ENCODE measurements at regions of chr14 and their contacts with region 1.

Region 1: GRCh38 chr14:59964251-59965007 is 44.5 kb downstream of the LRRC9 start:
- DNase-seq: peak in 1 of 5 donors; percentile 44
- H3K4me3 ChIP-seq: no peak overlapping the region
- H3K4me3 Mint-ChIP-seq: peak overlapping the region; percentile 83 to 94 (median 90)
- H3K27ac ChIP-seq: no peak overlapping the region
- H3K27ac Mint-ChIP-seq: peak overlapping the region in 7 of 8 donors; percentile 56 to 98 (median 93)
- H3K4me1 ChIP-seq: no peaks in the 10 kb centered on the region
- H3K4me1 Mint-ChIP-seq: peaks cover 10 to 23% (median 14%) of the 10 kb centered on the region in 3 donors
- H3K27me3 ChIP-seq: no peaks in the 10 kb centered on the region
- H3K27me3 Mint-ChIP-seq: peaks cover 4 to 6% of the 10 kb centered on the region in 2 donors

Region 2: DNA sequence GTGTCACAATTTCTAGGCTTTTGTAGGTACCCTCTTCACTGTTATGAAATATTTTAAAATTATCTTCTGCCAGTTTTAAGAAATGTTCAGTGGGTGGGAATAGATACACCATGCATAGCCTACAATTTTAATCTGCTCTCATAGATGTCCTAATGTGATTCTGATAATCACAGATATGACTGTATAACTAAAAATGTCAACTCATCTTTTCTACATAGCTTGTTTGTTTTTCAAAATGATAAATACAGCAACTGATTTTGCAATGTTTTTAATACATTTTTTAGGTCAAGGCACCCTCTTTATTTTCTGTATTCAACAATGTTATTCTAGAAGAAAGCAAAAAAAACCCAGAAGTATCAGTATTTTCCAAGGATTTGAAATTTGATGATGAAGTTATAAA is 17.1 kb after region 1 on chr14:
- CTCF ChIA-PET with region 1: interaction called, 11 read pairs
- POLR2A ChIA-PET with region 1: interaction called, 3 read pairs
- DNase-seq: no peak
- H3K4me3 ChIP-seq: no peak overlapping the region
- H3K4me3 Mint-ChIP-seq: no peak overlapping the region
- H3K27ac ChIP-seq: no peak overlapping the region
- H3K27ac Mint-ChIP-seq: no peak overlapping the region
- H3K4me1 ChIP-seq: no peaks in the 10 kb centered on the region
- H3K4me1 Mint-ChIP-seq: no peaks in the 10 kb centered on the region
- H3K27me3 ChIP-seq: no peaks in the 10 kb centered on the region
- H3K27me3 Mint-ChIP-seq: peaks cover 0 to 3% of the 10 kb centered on the region in 2 donors

Region 3: DNA sequence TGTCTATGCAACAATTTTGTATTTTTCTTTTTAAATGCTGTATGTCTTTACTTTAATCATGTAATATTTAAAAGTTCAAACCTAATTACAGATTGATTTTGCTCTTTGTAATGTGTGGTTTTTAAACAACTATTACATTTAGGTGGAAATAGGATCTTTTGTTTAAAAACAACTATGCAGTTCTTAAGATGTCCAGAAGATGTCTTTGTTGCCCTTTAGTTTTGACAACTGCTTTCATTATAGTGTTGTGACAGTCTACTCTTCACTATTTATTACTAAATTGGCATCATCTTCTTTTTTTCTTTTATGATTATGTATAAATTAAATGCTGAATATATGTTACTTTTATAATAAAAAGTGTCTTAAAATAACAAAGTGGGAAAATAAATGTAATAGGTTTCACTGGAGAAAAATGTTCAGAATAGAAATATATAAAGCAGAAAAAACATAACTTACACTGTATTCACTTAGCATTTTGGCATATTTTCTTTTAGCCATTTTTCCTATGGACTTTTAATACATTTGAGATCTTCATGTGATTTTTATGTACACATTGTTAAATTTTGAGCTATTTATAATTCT is 100.2 kb after region 1 on chr14:
- CTCF ChIA-PET with region 1: interaction called, 11 read pairs
- POLR2A ChIA-PET with region 1: no interaction called
- DNase-seq: peak in 2 of 5 donors; percentile 23 to 29
- H3K4me3 ChIP-seq: no peak overlapping the region
- H3K4me3 Mint-ChIP-seq: no peak overlapping the region
- H3K27ac ChIP-seq: no peak overlapping the region
- H3K27ac Mint-ChIP-seq: no peak overlapping the region
- H3K4me1 ChIP-seq: no peaks in the 10 kb centered on the region
- H3K4me1 Mint-ChIP-seq: no peaks in the 10 kb centered on the region
- H3K27me3 ChIP-seq: no peaks in the 10 kb centered on the region
- H3K27me3 Mint-ChIP-seq: peaks cover 2 to 17% of the 10 kb centered on the region in 2 donors

Measured in CD8-positive, alpha-beta memory T cell (primary cell).